ENCODE measurements at regions of chr11 and their contacts with region 1.

Region 1: DNA sequence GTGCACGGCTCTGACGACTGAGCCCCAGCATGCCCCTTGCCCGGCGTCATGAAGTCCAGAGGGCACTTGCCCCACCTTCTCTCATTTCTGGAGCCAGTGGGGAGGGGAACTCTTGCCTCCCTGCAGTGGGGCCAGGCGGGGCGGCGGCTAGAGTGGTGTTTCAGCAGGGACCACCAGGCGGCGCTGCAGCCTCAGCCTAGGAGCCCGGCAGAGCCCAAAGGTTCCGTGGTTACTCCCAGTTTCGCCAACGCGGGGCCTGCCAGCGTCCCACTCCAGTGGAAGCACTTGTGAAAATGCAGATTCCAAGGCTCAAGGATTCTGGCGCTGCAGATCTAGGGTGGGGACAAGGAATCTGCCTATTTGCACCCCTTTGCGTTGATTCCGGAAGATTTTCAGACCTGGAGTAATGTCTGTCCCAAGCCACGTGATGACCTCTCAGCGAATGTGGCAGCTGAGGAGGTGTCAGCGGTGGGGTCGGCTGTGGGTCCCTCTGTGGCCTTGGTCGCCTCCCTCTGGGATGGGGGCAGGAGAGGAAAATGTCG is 55.7 kb downstream of the CD82 start:
- DNase-seq: peak; percentile 63
- H3K4me3 ChIP-seq: no peak overlapping the region
- H3K27ac ChIP-seq: no peak overlapping the region
- H3K4me1 ChIP-seq: peaks cover 23% of the 10 kb centered on the region
- H3K27me3 ChIP-seq: no peaks in the 10 kb centered on the region
- CTCF ChIP-seq: peak; percentile 94 to 98
- POLR2A ChIP-seq: no peak

Region 2: DNA sequence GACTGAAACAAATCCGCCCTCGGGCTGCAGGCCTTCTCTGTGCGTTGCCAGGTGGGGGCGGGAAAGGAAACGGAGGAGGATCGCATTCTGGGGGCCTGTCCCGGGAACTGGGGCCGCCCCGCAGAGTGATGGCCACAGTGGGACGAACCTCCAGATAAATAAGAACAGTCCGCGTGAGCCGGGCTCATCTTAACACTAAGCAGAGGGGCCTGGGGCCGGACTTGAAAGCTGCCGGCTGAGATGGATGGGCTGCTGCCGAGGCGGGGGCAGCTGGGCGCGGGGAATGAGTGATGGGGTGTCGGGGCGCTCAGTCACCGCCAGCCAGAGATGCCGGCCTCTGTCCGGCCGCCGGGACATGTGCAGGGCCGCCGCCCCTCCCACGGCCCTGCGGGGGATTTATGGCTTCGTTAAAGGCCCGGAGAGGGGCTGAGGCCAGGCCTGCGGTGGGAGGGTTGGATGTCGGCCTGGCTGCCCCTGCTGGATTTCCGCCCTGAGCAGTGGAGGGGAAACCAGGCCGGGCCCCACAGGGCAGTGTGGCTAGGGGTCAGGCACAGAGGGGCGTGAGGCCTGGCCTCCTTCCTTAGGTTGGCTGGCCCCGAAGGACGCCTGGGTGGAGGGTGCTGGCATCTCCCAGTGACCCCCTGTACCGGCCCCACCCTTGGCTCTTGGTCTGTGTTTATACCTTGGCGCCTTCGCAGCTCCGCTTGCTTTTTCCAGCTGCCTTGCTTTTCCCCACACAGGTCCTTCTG is 101.0 kb before region 1 on chr11:
- CTCF ChIA-PET with region 1: interaction called, 15 read pairs
- POLR2A ChIA-PET with region 1: no interaction called
- dilution Hi-C with region 1: no loop called
- intact Hi-C with region 1: no loop called
- DNase-seq: no peak
- H3K4me3 ChIP-seq: no peak overlapping the region
- H3K27ac ChIP-seq: no peak overlapping the region
- H3K4me1 ChIP-seq: no peaks in the 10 kb centered on the region
- H3K27me3 ChIP-seq: peaks cover 11 to 24% of the 10 kb centered on the region in 2 experiments
- CTCF ChIP-seq: no peak
- POLR2A ChIP-seq: no peak

Region 3: DNA sequence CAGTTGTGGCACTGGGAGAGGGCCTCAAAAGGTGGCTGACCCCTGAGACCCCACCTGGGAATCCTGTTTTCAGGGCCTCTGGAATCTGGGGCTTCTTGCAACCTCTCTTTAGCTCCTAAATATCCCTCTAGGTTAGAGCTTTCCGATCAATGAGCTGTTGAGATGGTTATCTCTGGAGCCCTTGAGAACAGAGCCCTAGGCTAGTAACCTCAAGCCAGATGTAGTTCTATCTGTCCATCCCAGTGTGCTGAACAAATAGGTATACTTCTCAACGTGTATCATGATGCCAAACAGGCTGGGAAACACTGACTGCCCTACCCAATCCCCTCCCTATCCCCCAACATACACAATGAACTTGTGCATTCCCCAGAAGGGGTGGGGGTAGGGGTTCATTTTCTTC is 38.6 kb before region 1 on chr11:
- CTCF ChIA-PET with region 1: interaction called, 11 read pairs
- POLR2A ChIA-PET with region 1: no interaction called
- dilution Hi-C with region 1: no loop called
- intact Hi-C with region 1: no loop called
- DNase-seq: no peak
- H3K4me3 ChIP-seq: no peak overlapping the region
- H3K27ac ChIP-seq: no peak overlapping the region
- H3K4me1 ChIP-seq: no peaks in the 10 kb centered on the region
- H3K27me3 ChIP-seq: no peaks in the 10 kb centered on the region
- CTCF ChIP-seq: no peak
- POLR2A ChIP-seq: no peak

Region 4: GRCh38 chr11:44727373-44728287 is 106.4 kb after region 1 on chr11:
- CTCF ChIA-PET with region 1: interaction called, 11 read pairs
- POLR2A ChIA-PET with region 1: no interaction called
- dilution Hi-C with region 1: no loop called
- intact Hi-C with region 1: loop called (anchors 1 kb)
- DNase-seq: peak; percentile 82
- H3K4me3 ChIP-seq: peak overlapping the region; percentile 51 to 73 (median 61)
- H3K27ac ChIP-seq: no peak overlapping the region
- H3K4me1 ChIP-seq: peaks cover 35% of the 10 kb centered on the region
- H3K27me3 ChIP-seq: no peaks in the 10 kb centered on the region
- CTCF ChIP-seq: peak; percentile 89 to 97
- POLR2A ChIP-seq: no peak

Region 5: DNA sequence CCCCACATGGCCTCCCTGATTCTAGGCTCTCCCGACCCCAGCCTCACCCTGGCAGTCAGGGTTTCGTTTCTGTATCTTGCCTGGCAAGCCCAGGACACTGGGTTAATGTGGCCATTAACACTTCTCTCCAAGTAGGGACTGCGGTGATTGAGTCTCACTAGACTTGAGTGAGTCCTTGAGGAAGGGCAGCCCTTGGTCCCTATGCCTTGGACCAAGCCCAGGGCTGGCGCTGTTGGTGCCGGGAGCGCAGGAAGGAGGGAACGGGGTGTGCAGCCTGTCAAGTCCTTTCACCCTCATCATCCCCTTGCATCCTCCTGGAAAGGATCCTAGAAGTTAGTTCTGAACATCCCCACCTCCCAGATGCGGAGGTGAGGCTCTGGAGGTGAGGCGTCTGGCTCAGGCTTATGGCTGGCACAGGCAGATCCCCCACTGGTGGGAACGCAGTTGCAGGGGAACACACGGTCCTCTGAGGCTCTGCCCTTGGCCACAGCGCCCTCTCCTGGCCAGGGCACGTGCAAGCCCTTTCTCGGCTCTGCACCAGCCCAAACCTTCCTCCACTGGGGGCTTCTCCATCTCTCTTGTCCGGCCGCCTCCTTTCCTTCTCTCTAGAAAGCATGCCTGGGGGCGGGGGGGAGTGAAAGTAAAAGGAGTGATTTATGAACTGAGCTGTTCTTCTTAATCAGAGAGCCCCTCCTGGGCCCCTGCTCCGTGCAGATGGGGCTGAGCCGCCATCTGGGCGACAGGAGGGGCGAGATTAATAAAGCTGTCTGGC is 272.8 kb after region 1 on chr11:
- CTCF ChIA-PET with region 1: interaction called, 75 read pairs
- POLR2A ChIA-PET with region 1: no interaction called
- dilution Hi-C with region 1: loop called (anchors 10 kb)
- intact Hi-C with region 1: loop called (anchors 1 kb)
- DNase-seq: peak; percentile 69
- H3K4me3 ChIP-seq: no peak overlapping the region
- H3K27ac ChIP-seq: no peak overlapping the region
- H3K4me1 ChIP-seq: no peaks in the 10 kb centered on the region
- H3K27me3 ChIP-seq: no peaks in the 10 kb centered on the region
- CTCF ChIP-seq: peak; percentile 83 to 95
- POLR2A ChIP-seq: no peak

Region 6: DNA sequence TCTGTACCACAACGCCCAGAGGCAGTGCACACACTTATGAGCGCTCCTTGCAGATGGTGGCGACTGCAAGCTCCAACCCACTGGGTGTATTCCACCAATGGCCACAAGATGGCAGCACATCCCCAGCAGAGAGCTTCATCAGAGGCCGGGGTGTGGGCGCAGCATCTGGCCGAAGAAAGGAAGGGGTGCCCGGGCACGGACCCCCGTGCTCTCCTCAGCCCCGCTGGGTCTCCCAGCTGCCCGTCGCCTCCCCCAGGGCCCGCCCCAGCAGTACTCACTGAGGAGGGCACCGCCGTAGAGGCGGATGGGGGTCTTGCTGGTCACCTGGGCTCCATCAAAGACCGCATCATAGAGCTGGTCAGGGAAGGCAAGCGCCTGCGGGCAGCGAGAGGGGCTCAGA is 315.3 kb after region 1 on chr11:
- CTCF ChIA-PET with region 1: interaction called, 13 read pairs
- POLR2A ChIA-PET with region 1: no interaction called
- dilution Hi-C with region 1: no loop called
- intact Hi-C with region 1: no loop called
- DNase-seq: peak; percentile 82
- H3K4me3 ChIP-seq: no peak overlapping the region
- H3K27ac ChIP-seq: no peak overlapping the region
- H3K4me1 ChIP-seq: no peaks in the 10 kb centered on the region
- H3K27me3 ChIP-seq: no peaks in the 10 kb centered on the region
- CTCF ChIP-seq: peak; percentile 78 to 91
- POLR2A ChIP-seq: no peak

Region 7: GRCh38 chr11:45025716-45026492 is 404.7 kb after region 1 on chr11:
- CTCF ChIA-PET with region 1: no interaction called
- POLR2A ChIA-PET with region 1: no interaction called
- dilution Hi-C with region 1: no loop called
- intact Hi-C with region 1: no loop called
- DNase-seq: peak; percentile 98
- H3K4me3 ChIP-seq: no peak overlapping the region
- H3K27ac ChIP-seq: peak overlapping the region; percentile 67
- H3K4me1 ChIP-seq: peaks cover 14% of the 10 kb centered on the region
- H3K27me3 ChIP-seq: peaks cover 3 to 11% of the 10 kb centered on the region in 2 experiments
- CTCF ChIP-seq: no peak
- POLR2A ChIP-seq: no peak

Region 8: GRCh38 chr11:46259971-46260560 is 1638.9 kb after region 1 on chr11:
- CTCF ChIA-PET with region 1: no interaction called
- POLR2A ChIA-PET with region 1: no interaction called
- dilution Hi-C with region 1: no loop called
- intact Hi-C with region 1: no loop called
- DNase-seq: no peak
- H3K4me3 ChIP-seq: no peak overlapping the region
- H3K27ac ChIP-seq: no peak overlapping the region
- H3K4me1 ChIP-seq: no peaks in the 10 kb centered on the region
- H3K27me3 ChIP-seq: no peaks in the 10 kb centered on the region
- CTCF ChIP-seq: no peak
- POLR2A ChIP-seq: no peak